Common myeloid progenitor, CD34-positive (primary cell): ENCODE measurements at regions of chr17 and their contacts with region 1.

Region 1: GRCh38 chr17:82030470-82031302 is 792 bp upstream of the RAC3 start:
- DNase-seq: peak; percentile 77 to 88 (median 84)
- H3K4me3 ChIP-seq: peak overlapping the region; percentile 45 to 79 (median 65)
- H3K27ac ChIP-seq: no peak overlapping the region
- H3K4me1 ChIP-seq: peaks cover 0 to 33% (median 22%) of the 10 kb centered on the region in 4 experiments
- H3K27me3 ChIP-seq: no peaks in the 10 kb centered on the region

Region 2: DNA sequence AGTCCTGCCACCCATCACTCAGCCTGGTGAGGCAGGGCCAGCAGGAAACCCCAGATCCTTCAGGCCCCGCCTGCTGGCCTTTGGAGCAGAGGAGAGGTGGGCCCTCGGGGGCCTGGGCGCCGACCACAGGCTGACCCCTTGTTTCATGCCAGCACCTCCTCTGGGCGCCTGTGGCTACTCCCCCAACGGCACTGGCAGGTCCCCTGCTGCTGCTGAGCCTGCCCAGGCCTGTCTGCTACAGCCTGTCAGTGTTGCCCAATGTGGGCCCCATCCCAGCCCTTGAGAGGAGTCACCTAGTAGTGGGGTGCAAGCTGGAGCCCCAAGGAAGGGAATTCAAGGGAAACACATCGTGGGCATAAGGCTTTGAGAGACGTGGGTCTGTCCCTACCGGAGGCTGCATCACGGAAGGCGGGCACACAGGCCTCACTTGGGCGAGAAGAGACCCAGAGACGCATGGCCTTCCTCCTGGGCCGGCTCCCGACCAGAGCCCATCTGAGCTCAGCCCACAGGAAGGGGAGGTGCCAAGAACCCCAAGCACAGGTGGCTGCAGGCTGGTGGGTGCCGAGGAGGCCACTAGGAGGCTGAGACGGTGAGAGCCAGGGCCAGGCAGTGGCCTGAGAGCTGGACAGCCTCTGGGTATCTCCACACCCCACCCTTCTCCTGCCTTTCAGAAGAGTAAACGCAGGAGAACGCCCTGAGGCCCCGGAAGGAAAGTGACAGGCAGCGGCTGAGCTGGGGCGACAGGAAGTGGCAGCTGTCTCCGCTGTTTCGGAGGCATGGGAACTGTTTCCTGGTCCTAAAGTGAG is 75.4 kb after region 1 on chr17:
- CTCF ChIA-PET with region 1: interaction called, 14 read pairs
- POLR2A ChIA-PET with region 1: interaction called, 3 read pairs
- DNase-seq: peak; percentile 55 to 76 (median 71)
- H3K4me3 ChIP-seq: peak overlapping the region; percentile 33 to 74 (median 55)
- H3K27ac ChIP-seq: peak overlapping the region; percentile 25 to 60
- H3K4me1 ChIP-seq: peaks cover 0 to 31% (median 23%) of the 10 kb centered on the region in 4 experiments
- H3K27me3 ChIP-seq: no peaks in the 10 kb centered on the region

Region 3: DNA sequence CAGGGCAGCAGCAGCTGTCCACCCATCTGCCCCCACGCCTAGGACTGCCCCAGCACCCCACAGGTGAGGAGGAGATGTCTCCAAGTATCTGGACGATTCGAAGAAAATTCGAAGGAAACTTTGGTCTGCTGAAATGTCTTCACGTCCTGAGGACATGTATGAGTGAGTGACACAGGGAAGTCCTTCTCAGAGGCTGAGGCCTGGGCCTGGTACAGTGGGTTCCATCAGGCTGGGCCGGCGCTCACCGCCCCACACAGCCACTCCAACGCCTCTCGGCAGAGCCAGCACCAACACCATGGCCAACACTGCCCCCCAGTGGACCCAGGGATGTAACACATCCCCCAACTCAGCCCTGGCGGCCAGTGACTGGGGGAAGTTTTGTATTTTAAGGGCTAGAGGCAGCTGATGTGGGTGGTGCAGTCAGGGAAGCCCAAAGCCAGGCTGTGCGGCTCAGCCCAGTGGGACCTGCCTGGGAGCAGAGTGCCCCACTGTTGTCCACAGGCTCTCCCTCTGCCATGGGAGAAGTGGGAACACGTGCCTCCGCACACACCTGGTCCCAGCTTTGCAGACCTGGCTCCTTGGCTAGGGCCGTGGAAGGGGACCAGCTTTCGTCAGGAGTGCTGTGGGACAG is 123.2 kb after region 1 on chr17:
- CTCF ChIA-PET with region 1: interaction called, 18 read pairs
- POLR2A ChIA-PET with region 1: no interaction called
- DNase-seq: peak; percentile 71 to 85 (median 79)
- H3K4me3 ChIP-seq: no peak overlapping the region
- H3K27ac ChIP-seq: no peak overlapping the region
- H3K4me1 ChIP-seq: peaks cover 0 to 6% (median 4%) of the 10 kb centered on the region in 4 experiments
- H3K27me3 ChIP-seq: no peaks in the 10 kb centered on the region